Pancreas (tissue), 10 donors: ENCODE measurements at regions of chr11 and their contacts with region 1.

Region 1: GRCh38 chr11:92931746-92932422 is 37.6 kb upstream of the MTNR1B start:
- DNase-seq: no peak
- ATAC-seq: peak in 2 of 4 donors; percentile 52 to 63
- H3K4me3 ChIP-seq: no peak overlapping the region
- H3K27ac ChIP-seq: no peak overlapping the region
- H3K4me1 ChIP-seq: no peaks in the 10 kb centered on the region
- H3K27me3 ChIP-seq: no peaks in the 10 kb centered on the region
- CTCF ChIP-seq: no peak

Region 2: GRCh38 chr11:92911478-92911877 is 20.4 kb before region 1 on chr11:
- intact Hi-C with region 1: no loop called
- DNase-seq: no peak
- ATAC-seq: peak in 1 of 4 donors; percentile 25
- H3K4me3 ChIP-seq: no peak overlapping the region
- H3K27ac ChIP-seq: no peak overlapping the region
- H3K4me1 ChIP-seq: no peaks in the 10 kb centered on the region
- H3K27me3 ChIP-seq: no peaks in the 10 kb centered on the region
- CTCF ChIP-seq: no peak

Region 3: GRCh38 chr11:93131709-93132108 is 199.8 kb after region 1 on chr11:
- intact Hi-C with region 1: no loop called
- DNase-seq: no peak
- ATAC-seq: peak in 3 of 4 donors; percentile 50 to 70 (median 55)
- H3K4me3 ChIP-seq: no peak overlapping the region
- H3K27ac ChIP-seq: no peak overlapping the region
- H3K4me1 ChIP-seq: no peaks in the 10 kb centered on the region
- H3K27me3 ChIP-seq: no peaks in the 10 kb centered on the region
- CTCF ChIP-seq: no peak

Region 4: DNA sequence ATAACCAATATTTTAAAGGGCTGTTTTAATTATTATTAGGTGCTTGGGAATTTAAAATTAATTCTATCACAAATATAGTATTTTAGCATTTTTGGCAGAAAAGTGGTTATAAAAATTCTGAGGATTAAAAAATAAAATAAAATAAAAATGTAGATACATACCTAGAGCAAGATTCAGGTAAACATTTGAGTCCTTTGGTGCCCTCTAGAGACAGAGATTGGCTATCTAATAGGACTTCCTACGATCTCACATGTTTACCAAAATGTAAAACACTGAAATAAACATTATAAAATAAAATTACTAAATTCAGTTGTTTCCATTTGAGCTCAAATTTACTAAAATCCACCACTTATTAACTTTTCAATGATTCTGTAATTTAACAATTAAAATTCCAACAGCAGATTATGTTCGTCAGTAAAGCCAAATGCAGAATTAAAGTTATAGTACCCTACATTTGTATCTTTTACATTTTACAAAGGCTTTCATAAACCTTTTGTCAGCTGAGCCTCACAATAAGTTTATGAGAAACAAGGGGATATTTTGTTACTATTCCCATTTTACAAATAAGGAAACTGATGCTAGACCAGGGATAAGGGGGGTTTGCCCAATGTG is 238.2 kb after region 1 on chr11:
- intact Hi-C with region 1: loop called in 1 of 3 experiments (anchors 10 kb)
- DNase-seq: no peak
- ATAC-seq: peak in 3 of 4 donors; percentile 60 to 67 (median 64)
- H3K4me3 ChIP-seq: no peak overlapping the region
- H3K27ac ChIP-seq: no peak overlapping the region
- H3K4me1 ChIP-seq: no peaks in the 10 kb centered on the region
- H3K27me3 ChIP-seq: no peaks in the 10 kb centered on the region
- CTCF ChIP-seq: peak in 3 of 4 donors; percentile 15 to 32 (median 24)